ENCODE measurements at regions of chr6 and their contacts with region 1.

Region 1: GRCh38 chr6:56851541-56852259 is 103.2 kb upstream of the BEND6 start:
- DNase-seq: peak in 2 of 4 donors; percentile 70 to 83
- ATAC-seq: peak; percentile 97
- H3K4me3 ChIP-seq: peak overlapping the region; percentile 27 to 30
- H3K27ac ChIP-seq: peak overlapping the region in 1 of 2 donors; percentile 53
- H3K4me1 ChIP-seq: peaks cover 0 to 13% of the 10 kb centered on the region in 2 donors
- H3K27me3 ChIP-seq: peaks cover 0 to 12% of the 10 kb centered on the region in 2 donors
- CTCF ChIP-seq: peak; percentile 12 to 40

Region 2: DNA sequence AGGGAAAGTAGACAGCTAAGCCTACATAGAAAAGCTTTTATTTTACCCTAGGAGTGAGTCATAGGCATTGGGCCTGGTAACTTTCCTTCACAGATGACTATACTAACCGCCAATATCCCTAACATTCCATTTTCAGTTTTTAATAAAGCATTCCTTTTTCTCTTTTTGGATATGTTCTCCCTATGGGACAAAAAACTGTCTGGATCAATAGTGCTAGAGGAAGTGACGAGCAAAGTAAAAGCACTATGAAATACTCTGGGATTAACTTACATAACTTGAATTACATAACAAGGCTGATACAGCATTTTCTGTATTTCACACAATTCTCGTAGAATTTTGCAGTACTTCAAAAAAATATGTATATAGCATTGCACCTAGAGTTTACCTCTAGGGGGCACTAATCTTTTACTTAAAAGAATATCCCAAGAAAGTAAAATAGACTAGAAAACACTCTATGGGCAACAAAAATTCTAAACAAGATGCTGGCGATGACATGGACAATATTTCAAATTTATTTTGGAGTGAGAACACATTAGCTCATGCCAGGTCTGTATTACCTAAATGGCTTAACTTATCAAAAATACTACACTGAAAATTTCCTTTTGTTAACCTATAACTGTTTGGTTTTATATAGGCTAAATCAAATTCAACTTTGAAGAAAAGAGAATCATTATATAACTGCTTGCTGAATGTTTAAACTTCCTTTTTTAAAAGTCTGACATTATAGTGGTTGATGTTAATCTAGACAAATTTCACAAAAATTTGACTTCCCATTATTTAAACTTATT is 142.7 kb before region 1 on chr6:
- intact Hi-C with region 1: loop called in 1 of 2 experiments (anchors 10 kb)
- DNase-seq: peak in 2 of 4 donors; percentile 31 to 50
- ATAC-seq: peak; percentile 60
- H3K4me3 ChIP-seq: no peak overlapping the region
- H3K27ac ChIP-seq: no peak overlapping the region
- H3K4me1 ChIP-seq: peaks cover 0 to 6% of the 10 kb centered on the region in 2 donors
- H3K27me3 ChIP-seq: no peaks in the 10 kb centered on the region
- CTCF ChIP-seq: peak; percentile 54 to 60

Region 3: GRCh38 chr6:57172136-57173055 is 320.7 kb after region 1 on chr6 and contains the start of gene BAG2:
- intact Hi-C with region 1: no loop called
- DNase-seq: peak; percentile 77 to 93 (median 88)
- ATAC-seq: peak; percentile 93
- H3K4me3 ChIP-seq: peak within 1 kb of the TSS; percentile 62 to 74
- H3K27ac ChIP-seq: peak within 1 kb of the TSS; percentile 79 to 92
- H3K4me1 ChIP-seq: peaks cover 0 to 21% of the 10 kb centered on the region in 2 donors
- H3K27me3 ChIP-seq: no peaks in the 10 kb centered on the region
- CTCF ChIP-seq: peak in 1 of 2 donors; percentile 29
- polyA plus RNA-seq, gene BAG2: 6.0 to 10.9 (median 7.4) TPM

Region 4: DNA sequence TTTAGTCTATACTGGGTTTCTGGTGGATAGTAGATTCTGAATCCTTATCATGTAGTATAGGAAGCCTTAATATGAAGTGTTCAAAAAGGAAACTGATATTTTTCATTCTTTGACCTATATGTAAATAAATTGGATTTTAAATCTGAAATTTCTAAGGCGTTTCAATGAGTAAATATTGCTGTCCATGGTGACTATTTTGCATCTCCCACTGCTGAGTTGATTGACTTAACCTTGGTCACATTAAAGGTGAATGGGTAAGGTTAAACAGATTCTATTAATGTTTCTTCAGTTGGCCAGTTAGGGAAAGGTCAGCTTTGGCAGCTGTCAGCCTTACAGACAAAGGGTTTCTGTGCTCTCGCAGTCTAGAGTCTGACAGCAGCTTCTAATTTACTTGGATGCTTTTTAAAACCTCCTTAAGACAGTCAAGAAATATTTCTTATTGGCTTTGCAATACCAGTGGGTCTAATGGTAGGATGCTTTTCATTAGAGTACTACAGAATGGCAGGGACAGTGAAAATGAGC is 490.5 kb after region 1 on chr6:
- intact Hi-C with region 1: no loop called
- DNase-seq: no peak
- ATAC-seq: no peak
- H3K4me3 ChIP-seq: no peak overlapping the region
- H3K27ac ChIP-seq: no peak overlapping the region
- H3K4me1 ChIP-seq: no peaks in the 10 kb centered on the region
- H3K27me3 ChIP-seq: no peaks in the 10 kb centered on the region
- CTCF ChIP-seq: no peak